IMR-90 (cell line): ENCODE measurements at regions of chr17 and their contacts with region 1.

Region 1: DNA sequence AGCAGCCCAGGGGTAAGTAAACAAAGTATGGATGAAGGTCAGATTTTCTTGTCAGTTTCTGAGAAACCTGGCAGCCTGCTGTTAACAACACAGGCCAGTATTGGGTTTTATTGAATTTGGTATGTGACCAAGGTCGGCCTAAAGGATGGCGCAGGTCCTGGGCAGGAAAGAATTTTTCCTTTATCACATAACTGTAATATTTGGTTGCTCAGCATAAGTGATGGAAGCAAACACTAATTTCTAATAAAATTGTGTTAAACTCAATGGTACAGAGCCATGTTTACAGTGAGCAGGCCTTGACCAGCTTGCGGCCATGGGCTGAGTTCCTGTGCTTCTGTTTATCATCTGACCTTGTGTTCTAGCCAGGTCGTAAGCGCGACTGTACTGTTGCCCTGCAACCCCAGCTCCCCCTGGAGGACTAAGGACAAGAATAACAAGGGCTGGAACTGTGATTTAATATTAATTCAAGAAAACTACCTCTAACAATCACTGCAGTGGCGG is 10.5 kb downstream of the POLDIP2 start:
- DNase-seq: no peak
- ATAC-seq: peak; percentile 48
- H3K4me3 ChIP-seq: no peak overlapping the region
- H3K27ac ChIP-seq: peak overlapping the region; percentile 58
- H3K4me1 ChIP-seq: peaks cover 16% of the 10 kb centered on the region
- H3K27me3 ChIP-seq: no peaks in the 10 kb centered on the region
- CTCF ChIP-seq: peak; percentile 44
- POLR2A ChIP-seq: no peak
- RAD21 ChIP-seq: peak; percentile 32

Region 2: GRCh38 chr17:28161311-28161710 is 185.5 kb before region 1 on chr17:
- CTCF ChIA-PET with region 1: no interaction called
- POLR2A ChIA-PET with region 1: interaction called, 11 read pairs
- dilution Hi-C with region 1: no loop called
- in situ Hi-C with region 1: no loop called
- intact Hi-C with region 1: no loop called
- DNase-seq: no peak
- ATAC-seq: no peak
- H3K4me3 ChIP-seq: no peak overlapping the region
- H3K27ac ChIP-seq: peak overlapping the region; percentile 75
- H3K4me1 ChIP-seq: peaks cover 8% of the 10 kb centered on the region
- H3K27me3 ChIP-seq: no peaks in the 10 kb centered on the region
- CTCF ChIP-seq: no peak
- POLR2A ChIP-seq: no peak
- RAD21 ChIP-seq: no peak

Region 3: DNA sequence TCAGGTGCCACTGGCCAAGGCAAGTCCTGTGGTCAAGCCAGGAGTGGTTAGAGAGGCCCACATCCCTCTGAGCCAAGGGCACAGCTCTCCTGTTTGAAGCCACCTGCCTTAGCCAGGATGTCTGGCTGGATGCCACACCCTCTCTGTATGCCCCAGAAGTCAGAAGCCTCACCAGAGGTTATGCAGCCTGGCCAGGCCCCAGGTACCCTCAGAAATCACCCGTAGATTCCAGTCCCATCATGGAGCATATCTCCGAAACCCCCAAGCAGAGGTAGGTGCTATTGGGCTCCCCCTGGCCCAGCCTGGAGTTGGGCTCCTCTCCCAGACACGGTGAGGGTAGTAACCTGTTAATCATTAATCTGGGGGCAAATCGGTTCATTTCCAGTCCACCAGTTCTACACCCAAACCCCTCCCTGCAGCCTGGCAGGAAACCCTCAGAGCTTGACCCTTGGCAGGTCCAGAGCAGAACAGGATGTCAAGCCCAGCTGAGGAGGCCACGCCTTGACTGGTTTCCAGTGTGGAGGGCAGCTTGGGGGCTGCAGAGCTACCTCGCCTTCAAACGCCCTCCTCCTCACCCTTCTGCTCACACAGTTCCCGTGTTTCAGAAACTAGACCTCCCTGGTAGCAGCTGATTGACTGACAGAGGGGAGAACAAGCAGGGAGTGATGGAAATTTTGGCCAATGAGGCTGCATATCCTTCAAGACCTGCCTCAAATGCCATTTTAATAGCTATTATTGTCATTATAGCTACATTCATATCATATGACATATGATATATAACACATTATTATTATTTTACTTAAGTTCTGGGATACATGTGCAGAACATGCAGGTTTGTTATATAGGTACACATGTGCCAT is 88.2 kb before region 1 on chr17:
- CTCF ChIA-PET with region 1: no interaction called
- POLR2A ChIA-PET with region 1: no interaction called
- dilution Hi-C with region 1: no loop called
- in situ Hi-C with region 1: no loop called
- intact Hi-C with region 1: no loop called
- DNase-seq: no peak
- ATAC-seq: no peak
- H3K4me3 ChIP-seq: no peak overlapping the region
- H3K27ac ChIP-seq: no peak overlapping the region
- H3K4me1 ChIP-seq: no peaks in the 10 kb centered on the region
- H3K27me3 ChIP-seq: peaks cover 23% of the 10 kb centered on the region
- CTCF ChIP-seq: no peak
- POLR2A ChIP-seq: no peak
- RAD21 ChIP-seq: no peak

Region 4: GRCh38 chr17:28416703-28417311 is 70.0 kb after region 1 on chr17:
- CTCF ChIA-PET with region 1: interaction called, 3 read pairs
- POLR2A ChIA-PET with region 1: no interaction called
- dilution Hi-C with region 1: no loop called
- in situ Hi-C with region 1: no loop called
- intact Hi-C with region 1: loop called (anchors 2 kb)
- DNase-seq: peak; percentile 59
- ATAC-seq: peak; percentile 95
- H3K4me3 ChIP-seq: no peak overlapping the region
- H3K27ac ChIP-seq: no peak overlapping the region
- H3K4me1 ChIP-seq: no peaks in the 10 kb centered on the region
- H3K27me3 ChIP-seq: peaks cover 24% of the 10 kb centered on the region
- CTCF ChIP-seq: peak; percentile 69
- POLR2A ChIP-seq: no peak
- RAD21 ChIP-seq: peak; percentile 52

Region 5: GRCh38 chr17:28509789-28510188 is 163.0 kb after region 1 on chr17:
- CTCF ChIA-PET with region 1: no interaction called
- POLR2A ChIA-PET with region 1: no interaction called
- dilution Hi-C with region 1: no loop called
- in situ Hi-C with region 1: no loop called
- intact Hi-C with region 1: no loop called
- DNase-seq: no peak
- ATAC-seq: no peak
- H3K4me3 ChIP-seq: no peak overlapping the region
- H3K27ac ChIP-seq: no peak overlapping the region
- H3K4me1 ChIP-seq: no peaks in the 10 kb centered on the region
- H3K27me3 ChIP-seq: peaks cover 92% of the 10 kb centered on the region
- CTCF ChIP-seq: no peak
- POLR2A ChIP-seq: no peak
- RAD21 ChIP-seq: no peak